Activated CD4-positive, alpha-beta T cell treated with anti-CD3 and anti-CD28 coated beads for 36 hours (primary cell): ENCODE measurements at regions of chrX and their contacts with region 1.

Region 1: DNA sequence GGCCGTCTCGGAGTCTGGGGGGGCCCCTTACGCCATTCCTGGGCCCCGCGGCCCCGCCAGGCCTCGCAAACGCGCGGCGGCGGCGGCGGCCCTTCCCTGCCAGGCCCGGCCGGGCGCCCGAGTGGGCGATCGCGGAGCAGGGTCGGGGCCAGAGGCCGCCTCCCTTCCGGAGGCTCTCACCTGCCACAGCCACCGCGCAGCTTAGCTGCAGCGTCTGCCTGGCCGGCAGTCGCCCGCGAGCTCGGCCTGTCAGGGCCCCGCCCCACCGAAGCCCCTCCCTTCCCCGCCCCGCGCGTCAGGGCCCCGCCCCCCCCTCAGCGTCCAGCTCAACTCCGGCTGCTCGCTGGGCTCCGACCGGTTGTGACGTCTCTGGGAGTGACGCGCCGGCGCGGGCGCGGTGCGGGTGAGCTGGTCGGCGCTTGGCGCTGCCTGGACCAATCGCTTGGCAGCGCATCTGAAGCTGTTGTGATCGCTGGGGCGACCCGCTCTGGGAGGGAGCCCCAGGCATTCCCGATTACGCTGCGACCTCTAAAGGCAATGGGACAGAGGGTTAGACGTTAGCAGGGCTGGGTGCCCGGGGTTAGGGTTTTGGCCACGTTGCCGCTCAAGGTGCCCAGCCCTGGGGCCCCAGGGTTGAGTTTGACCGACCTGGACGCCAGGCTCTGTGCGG is at the start of gene SLC10A3:
- DNase-seq: peak; percentile 94
- ATAC-seq: peak; percentile 91
- H3K4me3 Mint-ChIP-seq: peak within 1 kb of the TSS; percentile 85
- H3K27ac Mint-ChIP-seq: peak within 1 kb of the TSS; percentile 89
- H3K4me1 Mint-ChIP-seq: peaks cover 17% of the 10 kb centered on the region
- H3K27me3 Mint-ChIP-seq: no peaks in the 10 kb centered on the region
- total RNA-seq, gene SLC10A3: 10.4 to 11.3 TPM

Region 2: DNA sequence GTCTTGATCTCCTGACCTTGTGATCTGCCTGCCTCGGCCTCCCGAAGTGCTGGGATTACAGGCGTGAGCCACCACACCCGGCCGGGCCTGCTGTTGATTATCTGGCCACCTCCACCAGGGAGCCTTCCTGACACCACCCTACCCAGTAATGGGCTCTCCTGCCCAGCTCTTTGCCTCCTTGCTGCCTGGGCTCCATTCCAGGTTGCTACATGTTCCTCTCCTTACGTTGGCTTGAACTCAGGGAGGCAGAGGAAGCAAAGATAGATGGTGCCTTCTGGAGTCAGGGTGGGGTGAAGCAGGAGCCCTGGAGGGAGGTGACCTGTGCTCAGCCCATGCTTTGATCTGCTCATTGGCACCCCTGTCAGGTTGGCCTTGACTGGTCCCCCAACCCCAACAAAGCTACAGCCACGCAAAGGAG is 142.4 kb before region 1 on chrX:
- CTCF ChIA-PET with region 1: no interaction called
- POLR2A ChIA-PET with region 1: no interaction called
- intact Hi-C with region 1: no loop called
- DNase-seq: no peak
- ATAC-seq: no peak
- H3K4me3 Mint-ChIP-seq: no peak overlapping the region
- H3K27ac Mint-ChIP-seq: no peak overlapping the region
- H3K4me1 Mint-ChIP-seq: peaks cover 18% of the 10 kb centered on the region
- H3K27me3 Mint-ChIP-seq: no peaks in the 10 kb centered on the region

Region 3: DNA sequence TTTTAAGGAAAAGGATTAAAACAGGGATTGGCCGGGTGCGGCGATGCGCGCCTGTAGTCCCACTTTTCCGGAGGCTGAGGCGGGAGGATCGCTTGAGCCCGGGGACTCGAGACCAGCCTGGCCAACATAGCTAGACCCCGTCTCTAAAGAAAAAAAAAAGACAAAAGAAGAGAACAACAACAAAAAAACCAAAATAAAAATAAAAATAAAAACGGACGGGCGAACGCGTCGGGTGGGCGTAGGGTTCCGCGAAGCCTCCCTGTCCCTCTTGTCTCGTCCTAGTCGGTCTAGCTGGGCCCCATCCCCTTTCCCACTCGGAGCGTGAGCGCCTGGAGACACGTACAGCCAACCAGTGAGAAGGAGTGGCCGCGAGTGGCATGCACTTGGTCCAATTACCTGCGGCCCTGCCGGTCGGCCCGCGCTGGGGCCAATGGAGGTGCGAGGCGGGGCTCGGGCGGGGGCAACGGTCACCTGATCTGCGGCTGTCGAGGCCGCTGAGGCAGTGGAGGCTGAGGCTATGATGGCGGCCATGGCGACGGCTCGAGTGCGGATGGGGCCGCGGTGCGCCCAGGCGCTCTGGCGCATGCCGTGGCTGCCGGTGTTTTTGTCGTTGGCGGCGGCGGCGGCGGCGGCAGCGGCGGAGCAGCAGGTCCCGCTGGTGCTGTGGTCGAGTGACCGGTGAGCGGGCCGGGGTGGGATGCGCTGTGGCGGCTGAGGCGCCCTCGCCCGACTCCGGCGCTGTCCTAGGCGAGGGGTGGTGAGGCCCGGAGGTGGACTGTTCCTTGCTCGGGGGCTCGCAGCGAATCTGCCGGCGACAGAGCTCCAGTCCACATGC is 62.2 kb before region 1 on chrX and contains the start of gene ATP6AP1:
- CTCF ChIA-PET with region 1: no interaction called
- POLR2A ChIA-PET with region 1: no interaction called
- intact Hi-C with region 1: loop called in 1 of 2 experiments (anchors 2 kb)
- DNase-seq: peak; percentile 94
- ATAC-seq: peak; percentile 99
- H3K4me3 Mint-ChIP-seq: peak within 1 kb of the TSS; percentile 77
- H3K27ac Mint-ChIP-seq: peak within 1 kb of the TSS; percentile 65
- H3K4me1 Mint-ChIP-seq: peaks cover 26% of the 10 kb centered on the region
- H3K27me3 Mint-ChIP-seq: no peaks in the 10 kb centered on the region
- total RNA-seq, gene ATP6AP1: 25.6 to 28.6 TPM

Region 4: GRCh38 chrX:154458114-154458953 is 32.2 kb before region 1 on chrX and contains the start of gene PLXNA3:
- CTCF ChIA-PET with region 1: interaction called, 3 read pairs
- POLR2A ChIA-PET with region 1: no interaction called
- intact Hi-C with region 1: loop called in 1 of 2 experiments (anchors 1 kb)
- DNase-seq: peak; percentile 66
- ATAC-seq: peak; percentile 54
- H3K4me3 Mint-ChIP-seq: peak within 1 kb of the TSS; percentile 88
- H3K27ac Mint-ChIP-seq: peak within 1 kb of the TSS; percentile 91
- H3K4me1 Mint-ChIP-seq: peaks cover 5% of the 10 kb centered on the region
- H3K27me3 Mint-ChIP-seq: no peaks in the 10 kb centered on the region
- total RNA-seq, gene PLXNA3: 23.2 to 25.3 TPM

Region 5: GRCh38 chrX:154534862-154535670 is 44.5 kb after region 1 on chrX:
- CTCF ChIA-PET with region 1: no interaction called
- POLR2A ChIA-PET with region 1: no interaction called
- intact Hi-C with region 1: loop called (anchors 1 to 5 kb)
- DNase-seq: peak; percentile 93
- ATAC-seq: peak; percentile 96
- H3K4me3 Mint-ChIP-seq: no peak overlapping the region
- H3K27ac Mint-ChIP-seq: no peak overlapping the region
- H3K4me1 Mint-ChIP-seq: peaks cover 13% of the 10 kb centered on the region
- H3K27me3 Mint-ChIP-seq: no peaks in the 10 kb centered on the region

Region 6: DNA sequence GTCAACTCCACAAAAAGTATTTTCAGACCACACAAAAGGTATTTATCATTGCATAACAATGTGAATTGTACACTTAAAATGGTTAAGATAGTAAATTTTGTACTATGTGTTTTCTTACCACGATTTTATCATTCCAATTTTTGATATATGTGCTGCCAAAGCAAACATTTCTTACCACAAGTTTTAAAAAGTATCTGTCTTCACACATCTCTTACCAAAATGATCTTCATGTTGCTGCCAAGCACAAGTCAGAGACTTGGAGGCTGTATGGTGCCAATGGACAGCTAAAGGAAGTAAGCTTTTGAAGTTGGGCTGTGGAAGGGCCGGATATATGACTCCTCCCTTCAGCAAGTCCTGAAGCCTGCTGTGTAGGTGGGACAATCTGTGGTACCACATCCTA is 1054.3 kb after region 1 on chrX:
- CTCF ChIA-PET with region 1: no interaction called
- POLR2A ChIA-PET with region 1: no interaction called
- intact Hi-C with region 1: no loop called
- DNase-seq: no peak
- ATAC-seq: no peak
- H3K4me3 Mint-ChIP-seq: no peak overlapping the region
- H3K27ac Mint-ChIP-seq: no peak overlapping the region
- H3K4me1 Mint-ChIP-seq: no peaks in the 10 kb centered on the region
- H3K27me3 Mint-ChIP-seq: no peaks in the 10 kb centered on the region